Dorsolateral prefrontal cortex (tissue), 120 donors: ENCODE measurements at regions of chr2 and their contacts with region 1.

Region 1: GRCh38 chr2:54723131-54723995 is at the start of gene EML6:
- DNase-seq: peak; percentile 94 to 99 (median 98)
- H3K4me3 ChIP-seq: peak within 1 kb of the TSS; percentile 65 to 97 (median 90)
- H3K27ac ChIP-seq: peak within 1 kb of the TSS in 57 of 59 donors; percentile 18 to 90 (median 81)
- H3K27me3 ChIP-seq: no peaks in the 10 kb centered on the region
- CTCF ChIP-seq: peak in 46 of 56 donors; percentile 11 to 74 (median 37)
- total RNA-seq, gene EML6: 19.0 to 50.3 (median 33.2) TPM

Region 2: GRCh38 chr2:54634564-54635511 is 88.5 kb before region 1 on chr2:
- intact Hi-C with region 1: no loop called
- DNase-seq: no peak
- H3K4me3 ChIP-seq: peak overlapping the region in 4 of 59 donors; percentile 4 to 26 (median 23)
- H3K27ac ChIP-seq: peak overlapping the region in 57 of 59 donors; percentile 3 to 87 (median 75)
- H3K27me3 ChIP-seq: no peaks in the 10 kb centered on the region
- CTCF ChIP-seq: no peak

Region 3: GRCh38 chr2:54665436-54665856 is 57.9 kb before region 1 on chr2:
- intact Hi-C with region 1: loop called in 1 of 2 experiments (anchors 5 kb)
- DNase-seq: no peak
- H3K4me3 ChIP-seq: peak overlapping the region in 1 of 59 donors; percentile 17
- H3K27ac ChIP-seq: peak overlapping the region; percentile 55 to 98 (median 93)
- H3K27me3 ChIP-seq: no peaks in the 10 kb centered on the region
- CTCF ChIP-seq: peak in 51 of 56 donors; percentile 23 to 65 (median 46)

Region 4: DNA sequence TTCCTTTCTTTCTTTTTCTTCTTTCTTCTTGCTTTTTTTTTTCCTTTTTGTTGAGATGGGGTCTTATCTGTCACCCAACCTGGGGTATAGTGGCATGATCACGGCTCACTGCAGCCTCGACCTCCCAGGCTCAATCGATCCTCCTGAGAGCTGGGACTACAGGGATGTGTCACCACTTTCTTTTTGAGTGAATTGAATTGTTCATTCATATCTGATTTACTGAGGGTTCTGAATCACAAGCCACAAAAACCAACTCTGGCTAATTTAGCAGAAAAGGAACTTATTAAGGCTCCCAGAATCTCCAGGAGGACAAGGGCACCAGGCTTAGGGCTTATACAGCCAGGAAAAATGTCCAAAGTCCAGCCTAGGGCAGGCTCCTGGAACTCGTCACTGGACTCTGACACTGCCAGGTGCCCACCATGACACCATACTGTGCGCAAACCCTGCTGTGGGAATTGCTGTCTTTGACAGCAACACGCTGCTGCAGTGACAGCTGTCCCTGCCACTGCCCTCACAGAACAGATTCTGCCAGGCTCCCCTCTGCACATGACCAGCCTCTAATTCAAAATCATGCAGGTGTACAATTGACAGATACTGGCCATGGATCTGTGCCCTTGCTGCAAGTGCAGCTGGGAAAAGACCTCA is 42.8 kb before region 1 on chr2:
- intact Hi-C with region 1: no loop called
- DNase-seq: no peak
- H3K4me3 ChIP-seq: no peak overlapping the region
- H3K27ac ChIP-seq: peak overlapping the region in 1 of 59 donors; percentile 4
- H3K27me3 ChIP-seq: no peaks in the 10 kb centered on the region
- CTCF ChIP-seq: no peak

Region 5: GRCh38 chr2:54803783-54804751 is 80.7 kb after region 1 on chr2:
- intact Hi-C with region 1: no loop called
- DNase-seq: no peak
- H3K4me3 ChIP-seq: no peak overlapping the region
- H3K27ac ChIP-seq: no peak overlapping the region
- H3K27me3 ChIP-seq: no peaks in the 10 kb centered on the region
- CTCF ChIP-seq: no peak

Region 6: DNA sequence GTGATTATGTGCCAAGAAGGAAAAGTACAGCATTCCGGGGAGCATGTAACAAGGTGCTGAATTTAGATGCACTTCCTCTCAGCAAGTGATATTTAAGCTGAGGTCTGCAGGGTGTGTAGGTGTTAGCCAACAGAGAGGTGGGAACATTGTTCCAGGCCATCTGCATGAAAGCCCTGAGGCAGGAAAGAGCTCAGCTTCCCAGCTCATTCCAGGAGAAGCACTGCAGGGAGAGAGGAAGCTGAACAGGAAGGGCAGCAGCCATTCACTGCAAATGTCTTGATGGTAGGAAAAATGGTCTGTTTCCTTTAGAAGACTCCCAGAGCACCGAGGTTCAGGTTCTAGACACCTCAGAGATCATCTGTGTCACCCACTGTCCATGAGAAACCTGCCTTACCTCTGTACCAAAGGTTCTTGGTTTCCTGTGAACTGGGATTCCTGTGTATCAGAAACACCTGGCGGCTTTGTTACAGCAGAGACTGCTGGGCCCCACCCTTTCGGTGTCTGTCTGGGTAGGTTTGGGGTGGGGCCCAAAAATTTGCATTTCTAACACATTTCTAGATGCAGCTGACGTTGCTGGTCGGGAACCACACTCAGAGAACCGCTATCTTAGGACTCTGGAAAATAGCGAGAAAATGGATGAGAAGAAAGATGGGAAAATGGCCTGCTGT is 242.9 kb after region 1 on chr2:
- intact Hi-C with region 1: loop called in 1 of 2 experiments (anchors 10 kb)
- DNase-seq: peak in 2 of 10 donors; percentile 38 to 53
- H3K4me3 ChIP-seq: no peak overlapping the region
- H3K27ac ChIP-seq: peak overlapping the region in 58 of 59 donors; percentile 2 to 88 (median 74)
- H3K27me3 ChIP-seq: no peaks in the 10 kb centered on the region
- CTCF ChIP-seq: no peak

Region 7: DNA sequence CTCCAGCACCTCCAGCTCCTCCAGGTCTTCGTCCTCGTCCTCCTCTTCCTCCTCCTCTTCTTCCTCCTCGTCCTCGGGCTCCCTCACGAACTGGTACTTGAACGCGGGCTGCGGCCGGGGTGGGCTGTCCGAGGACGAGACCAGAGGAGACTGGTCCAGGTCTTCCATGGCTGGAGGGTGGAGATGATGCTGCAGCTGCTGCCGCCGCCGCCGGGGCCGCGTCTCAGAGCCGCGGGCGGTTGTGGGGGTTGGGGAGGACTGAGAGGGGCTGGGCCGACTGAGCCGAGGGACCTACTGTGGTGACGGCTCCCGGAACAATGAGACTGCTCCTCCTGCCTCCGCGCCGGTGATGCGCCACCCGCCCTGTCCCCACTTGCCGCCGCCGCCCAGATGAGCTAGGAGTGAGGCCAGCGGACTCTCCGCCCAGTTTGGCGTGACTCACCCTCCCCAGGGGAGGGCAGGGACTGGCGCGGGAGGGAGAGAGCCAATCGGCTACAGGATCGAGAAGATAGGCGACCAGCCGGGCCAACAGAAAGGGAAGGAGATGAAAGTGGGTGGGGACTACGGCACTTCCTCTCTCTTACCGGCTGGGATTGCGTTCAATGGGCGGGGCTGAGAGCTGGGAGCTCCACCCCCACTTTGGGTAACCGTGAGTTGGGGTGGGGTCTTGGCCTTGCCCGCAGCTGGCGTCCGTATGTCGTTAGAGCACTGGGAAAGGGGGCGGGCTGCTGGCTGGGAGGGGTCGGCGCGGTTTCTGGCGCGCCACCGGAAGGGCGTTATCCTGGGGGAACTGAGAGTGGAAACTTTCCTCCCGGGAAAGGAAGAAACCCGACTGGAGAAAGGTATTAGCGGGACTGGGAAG is 327.0 kb after region 1 on chr2 and contains the start of gene RTN4:
- intact Hi-C with region 1: loop called in 1 of 2 experiments (anchors 10 kb)
- DNase-seq: peak; percentile 97 to 100 (median 99)
- H3K4me3 ChIP-seq: peak within 1 kb of the TSS; percentile 70 to 99 (median 94)
- H3K27ac ChIP-seq: peak within 1 kb of the TSS; percentile 95 to 100 (median 99)
- H3K27me3 ChIP-seq: no peaks in the 10 kb centered on the region
- CTCF ChIP-seq: peak in 23 of 56 donors; percentile 5 to 56 (median 18)
- total RNA-seq, gene RTN4: 342 to 975 (median 727) TPM

Region 8: DNA sequence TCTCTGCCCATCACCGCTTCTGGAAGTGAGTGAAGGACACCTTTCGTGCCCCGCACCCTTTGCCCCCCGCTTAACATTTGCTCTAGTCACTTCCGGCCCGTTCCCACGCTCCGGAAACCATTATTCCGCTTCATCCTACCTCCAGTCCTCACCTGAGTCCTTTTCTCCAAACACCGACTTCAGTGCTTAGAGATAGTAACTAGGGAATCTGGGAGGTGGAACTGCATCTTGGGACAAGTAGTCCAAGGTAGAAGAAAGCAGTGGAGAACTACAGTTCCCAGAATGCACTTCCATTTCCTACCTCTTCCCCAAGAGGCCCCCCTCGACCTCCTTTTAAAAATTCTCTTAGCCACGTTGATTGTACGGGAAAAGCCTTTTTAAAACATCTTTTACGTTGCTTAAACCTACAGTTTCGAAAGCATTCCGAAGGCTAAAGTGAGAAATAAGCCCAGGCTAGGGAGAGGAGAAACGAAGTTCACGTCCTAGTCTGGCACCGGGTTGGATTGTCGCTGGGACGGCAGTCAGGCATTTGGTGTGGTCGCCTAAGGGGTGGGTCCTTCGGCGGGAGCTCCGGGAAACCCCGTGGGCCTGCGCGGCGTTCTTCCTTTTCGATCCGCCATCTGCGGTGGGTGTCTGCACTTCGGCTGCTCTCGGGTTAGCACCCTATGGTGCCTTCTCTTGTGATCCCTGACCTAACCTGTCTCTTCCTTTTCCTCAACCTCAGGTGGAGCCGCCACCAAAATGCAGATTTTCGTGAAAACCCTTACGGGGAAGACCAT is 508.9 kb after region 1 on chr2 and contains the starts of genes CLHC1 and RPS27A:
- intact Hi-C with region 1: loop called in 1 of 2 experiments (anchors 5 kb)
- DNase-seq: peak; percentile 79 to 93 (median 90)
- H3K4me3 ChIP-seq: peak within 1 kb of the TSS; percentile 65 to 100 (median 93)
- H3K27ac ChIP-seq: peak within 1 kb of the TSS; percentile 80 to 99 (median 97)
- H3K27me3 ChIP-seq: no peaks in the 10 kb centered on the region
- CTCF ChIP-seq: peak in 34 of 56 donors; percentile 6 to 59 (median 34)
- total RNA-seq, gene CLHC1: 12.9 to 62.6 (median 27.4) TPM
- total RNA-seq, gene RPS27A: 221 to 469 (median 349) TPM